GM10248 (cell line): ENCODE measurements at regions of chr15 and their contacts with region 1.

Region 1: GRCh38 chr15:42084460-42085235 is 9.7 kb downstream of the PLA2G4D start:
- DNase-seq: peak; percentile 80
- CTCF ChIP-seq: peak; percentile 97

Region 2: GRCh38 chr15:42056934-42057779 is 27.5 kb before region 1 on chr15:
- CTCF ChIA-PET with region 1: interaction called, 79 read pairs
- POLR2A ChIA-PET with region 1: no interaction called
- DNase-seq: peak; percentile 82
- CTCF ChIP-seq: peak; percentile 71

Region 3: GRCh38 chr15:42069496-42070278 is 15.0 kb before region 1 on chr15:
- CTCF ChIA-PET with region 1: interaction called, 79 read pairs
- POLR2A ChIA-PET with region 1: no interaction called
- DNase-seq: no peak
- CTCF ChIP-seq: no peak

Region 4: DNA sequence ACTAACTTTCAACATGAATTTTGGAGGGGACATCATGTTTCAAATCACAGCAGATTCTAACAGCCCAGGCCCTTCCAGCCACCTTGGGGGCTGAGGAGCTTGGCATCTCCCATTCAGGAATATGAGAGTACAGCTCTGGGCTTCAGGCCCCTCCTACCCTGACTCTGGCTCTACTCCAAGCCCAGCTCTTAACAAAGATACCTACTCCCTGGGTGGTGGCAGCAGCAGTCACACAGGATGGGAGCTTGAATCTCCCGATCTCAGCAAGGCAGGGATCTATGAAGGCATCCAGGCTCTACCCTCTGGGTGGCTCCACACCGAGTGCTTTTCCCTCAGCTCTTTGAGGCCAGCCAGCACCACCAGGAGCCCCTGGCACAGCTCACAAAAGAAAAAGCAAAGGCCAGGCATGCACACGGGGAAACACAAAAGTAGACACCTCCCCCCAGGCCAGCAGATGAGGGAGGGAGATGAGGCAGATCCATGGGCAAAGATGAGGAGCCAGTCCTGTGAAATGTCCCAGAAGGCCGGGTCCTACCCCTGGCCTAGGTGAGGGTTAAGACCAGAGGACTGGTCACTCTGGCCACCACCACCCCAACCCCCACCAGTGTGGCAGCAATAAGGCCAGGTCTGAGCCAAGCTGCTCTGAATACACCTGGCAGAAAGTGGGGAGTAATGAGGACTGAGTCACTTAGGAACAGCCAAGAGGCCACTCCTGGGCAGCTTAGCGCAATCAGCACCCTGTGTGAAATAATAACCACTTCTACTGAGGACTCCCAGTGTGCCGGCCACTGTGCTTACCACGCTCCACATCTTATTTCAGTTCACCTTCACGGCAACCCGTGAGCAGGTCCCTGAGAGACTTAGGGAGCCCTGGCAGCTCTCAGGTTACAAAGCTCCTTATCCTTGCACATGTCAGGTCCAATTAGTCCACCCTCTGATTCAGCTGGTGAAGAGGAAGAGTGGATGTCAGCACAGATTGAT is 47.5 kb after region 1 on chr15:
- CTCF ChIA-PET with region 1: interaction called, 27 read pairs
- POLR2A ChIA-PET with region 1: no interaction called
- DNase-seq: no peak
- CTCF ChIP-seq: no peak

Region 5: DNA sequence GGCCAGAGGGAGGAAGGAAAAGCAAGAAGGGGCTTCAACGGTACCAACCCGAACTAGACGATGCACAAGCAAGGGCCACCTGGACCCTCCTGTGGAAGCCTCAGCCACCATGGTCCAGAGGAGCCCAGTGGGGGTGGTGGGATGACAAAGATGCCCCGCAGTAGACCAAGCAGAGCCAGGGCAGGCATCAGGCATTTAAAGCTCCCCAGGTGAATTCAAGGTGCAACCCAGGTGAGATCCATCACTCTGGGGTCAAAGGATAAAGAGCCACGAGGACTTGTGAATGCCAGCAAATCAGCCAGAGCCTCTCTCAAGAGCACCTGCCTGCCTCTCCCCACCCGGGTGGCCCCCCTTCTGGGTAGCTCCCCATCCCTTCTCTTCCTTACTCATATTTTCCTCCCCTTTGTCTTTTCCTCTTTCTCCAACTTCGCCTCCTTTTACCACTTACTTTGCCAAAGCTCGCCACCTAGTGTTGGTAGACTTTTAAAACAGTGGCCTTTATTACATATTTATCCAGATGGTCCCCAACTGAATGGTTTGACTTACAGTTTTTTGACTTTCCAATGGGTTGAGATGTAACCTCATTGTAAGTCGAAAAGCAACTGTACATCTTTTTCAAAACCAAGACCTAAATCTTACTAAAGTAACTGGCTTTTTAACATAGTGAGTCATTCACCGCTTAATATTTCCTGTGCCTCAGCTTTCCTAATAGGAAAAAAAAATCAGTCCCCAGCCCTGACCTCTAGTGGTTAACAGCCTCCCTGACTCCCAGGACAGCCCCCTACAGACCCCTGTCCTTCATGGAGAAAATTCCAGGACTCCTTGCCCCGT is 53.0 kb after region 1 on chr15:
- CTCF ChIA-PET with region 1: interaction called, 27 read pairs
- POLR2A ChIA-PET with region 1: no interaction called
- DNase-seq: peak; percentile 67
- CTCF ChIP-seq: peak; percentile 57

Region 6: GRCh38 chr15:42332331-42332730 is 247.7 kb after region 1 on chr15:
- CTCF ChIA-PET with region 1: no interaction called
- POLR2A ChIA-PET with region 1: no interaction called
- DNase-seq: no peak
- CTCF ChIP-seq: no peak